Right lobe of liver (tissue), 6 donors: ENCODE measurements at regions of chr6 and their contacts with region 1.

Region 1: DNA sequence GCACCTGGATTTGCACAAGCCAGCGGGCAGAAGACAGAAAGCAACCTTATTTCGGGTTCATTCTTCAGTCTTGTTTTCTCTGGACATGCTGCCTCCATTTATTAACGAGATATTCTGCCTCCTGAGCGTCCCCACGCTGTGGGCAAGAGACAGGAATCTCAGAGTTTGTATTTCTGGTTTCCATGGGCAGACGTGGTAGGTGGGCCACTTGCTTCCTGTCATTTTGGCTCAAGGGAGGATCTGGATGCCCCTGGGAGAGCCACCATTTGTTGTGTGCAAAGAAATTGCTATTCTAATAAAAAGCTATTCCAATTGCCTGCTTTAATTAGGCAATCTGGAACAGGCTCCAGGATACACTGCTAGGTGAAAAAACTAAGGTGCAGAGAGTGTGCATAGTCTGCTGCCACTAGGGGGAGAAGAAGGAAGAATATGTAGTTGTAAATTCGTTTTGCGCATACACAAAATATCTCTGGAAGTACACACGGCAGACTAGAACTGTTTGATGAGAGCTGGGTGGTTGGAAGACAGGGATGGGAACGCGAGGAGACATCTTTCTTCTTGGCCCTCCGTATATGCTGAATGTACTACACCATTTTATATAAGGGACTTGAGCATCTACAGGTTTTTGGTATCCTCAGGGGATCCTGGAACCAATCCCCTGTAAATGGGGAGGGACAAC is 30.1 kb upstream of the SLC16A10 start:
- DNase-seq: peak in 1 of 3 donors; percentile 54
- ATAC-seq: peak; percentile 97 to 99 (median 98)
- H3K4me3 ChIP-seq: no peak overlapping the region
- H3K27ac ChIP-seq: no peak overlapping the region
- H3K4me1 ChIP-seq: no peaks in the 10 kb centered on the region
- H3K27me3 ChIP-seq: no peaks in the 10 kb centered on the region
- CTCF ChIP-seq: peak; percentile 70 to 88 (median 76)
- POLR2A ChIP-seq: no peak

Region 2: GRCh38 chr6:111210194-111210728 is 153.0 kb after region 1 on chr6:
- intact Hi-C with region 1: loop called (anchors 5 to 10 kb)
- DNase-seq: no peak
- ATAC-seq: peak; percentile 89 to 95 (median 92)
- H3K4me3 ChIP-seq: no peak overlapping the region
- H3K27ac ChIP-seq: no peak overlapping the region
- H3K4me1 ChIP-seq: no peaks in the 10 kb centered on the region
- H3K27me3 ChIP-seq: no peaks in the 10 kb centered on the region
- CTCF ChIP-seq: peak; percentile 72 to 82 (median 78)
- POLR2A ChIP-seq: no peak